ENCODE measurements at regions of chr16 and their contacts with region 1.

Region 1: DNA sequence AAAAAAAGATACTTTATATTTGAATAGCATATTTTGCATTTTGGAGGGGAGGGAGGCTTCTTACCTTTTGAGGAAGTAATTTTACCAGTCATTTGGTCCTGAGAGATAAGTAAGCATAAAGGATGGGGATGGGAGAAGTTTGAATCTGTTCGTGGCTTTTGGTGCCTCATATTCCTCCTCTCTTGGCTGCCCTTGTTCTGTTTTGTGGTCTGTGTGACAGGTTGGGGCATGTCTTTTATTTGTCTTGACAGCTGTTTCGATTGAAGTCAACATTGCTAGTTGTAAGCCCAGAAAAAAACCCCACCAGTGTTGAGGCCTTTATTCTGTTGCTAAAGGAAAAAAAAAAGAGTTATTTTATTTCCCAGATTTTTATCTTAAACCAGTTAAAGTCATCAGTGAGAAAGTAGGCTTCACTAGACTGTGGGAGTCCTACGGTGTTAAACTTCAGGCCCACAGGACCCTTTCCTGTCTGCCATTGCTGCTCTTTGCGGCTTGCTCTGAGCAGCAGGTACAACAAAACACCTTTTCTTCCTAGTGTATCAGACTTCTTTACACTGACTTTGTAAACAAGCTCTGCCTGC is 11.4 kb downstream of the SLC7A6 start:
- DNase-seq: peak in 9 of 10 donors; percentile 28 to 83 (median 66)
- ATAC-seq: peak; percentile 78 to 82
- H3K4me3 Mint-ChIP-seq: peak overlapping the region; percentile 49 to 93 (median 82)
- H3K27ac Mint-ChIP-seq: peak overlapping the region; percentile 89 to 100 (median 98)
- H3K4me1 Mint-ChIP-seq: peaks cover 31 to 76% (median 69%) of the 10 kb centered on the region in 4 donors
- H3K27me3 Mint-ChIP-seq: peaks cover 0 to 1% (median 0%) of the 10 kb centered on the region in 5 donors

Region 2: DNA sequence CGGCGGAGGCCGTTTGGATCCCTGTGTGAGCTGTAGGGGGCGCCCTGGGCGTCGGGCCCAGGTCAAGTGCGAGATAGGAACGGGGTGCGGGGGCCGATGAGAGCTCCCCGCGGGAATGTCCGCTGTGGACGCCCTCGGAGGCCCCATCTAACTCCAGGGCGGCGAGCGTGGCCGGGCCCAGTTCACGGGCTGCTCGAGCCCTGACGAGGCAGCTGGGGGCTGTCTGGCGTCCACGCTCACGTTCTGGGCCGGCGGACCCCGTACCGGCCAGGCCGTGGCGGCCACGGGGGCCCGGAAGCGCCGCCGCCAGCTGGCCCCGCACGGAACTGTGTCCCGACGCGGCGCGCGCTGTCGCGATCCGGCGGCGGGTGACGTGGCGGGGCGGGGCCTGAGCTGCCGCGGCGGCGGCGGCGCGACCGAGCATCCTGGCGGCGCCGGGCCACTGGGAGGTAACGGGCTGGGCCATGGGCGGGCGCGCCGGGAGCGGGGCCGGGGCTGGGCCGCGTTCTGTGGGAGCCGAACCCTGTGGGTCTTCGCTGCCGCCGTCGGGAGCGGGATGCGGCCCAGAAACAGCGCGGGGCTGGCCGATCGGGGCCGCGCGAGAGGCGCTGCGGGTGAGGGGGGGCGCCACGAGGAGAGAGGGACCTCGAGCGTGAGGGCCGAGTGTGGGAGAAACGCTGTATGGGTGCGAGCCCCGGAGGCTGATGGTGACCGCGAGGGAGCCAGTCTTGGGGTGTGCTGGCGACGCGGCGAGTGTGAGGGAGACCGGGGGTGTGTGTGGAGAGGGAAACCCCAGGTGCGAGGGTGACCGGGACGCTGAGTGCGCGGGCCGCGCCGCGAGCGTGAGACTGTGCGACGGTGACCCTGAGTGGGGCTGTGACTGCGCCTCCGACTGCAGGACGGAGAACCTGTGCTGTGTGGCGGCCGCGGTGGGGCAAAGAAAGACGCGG is 11.3 kb before region 1 on chr16 and contains the start of gene SLC7A6:
- POLR2A ChIA-PET with region 1: interaction called, 1,294 read pairs
- DNase-seq: peak; percentile 69 to 85 (median 82)
- ATAC-seq: peak; percentile 61 to 75
- H3K4me3 Mint-ChIP-seq: peak within 1 kb of the TSS; percentile 93 to 98 (median 96)
- H3K27ac Mint-ChIP-seq: peak within 1 kb of the TSS; percentile 89 to 99 (median 98)
- H3K4me1 Mint-ChIP-seq: peaks cover 35 to 62% (median 57%) of the 10 kb centered on the region in 4 donors
- H3K27me3 Mint-ChIP-seq: no peaks in the 10 kb centered on the region
- polyA plus RNA-seq, gene SLC7A6: 14.3 to 20.2 (median 19.2) TPM

Region 3: GRCh38 chr16:68644715-68645493 is 369.2 kb after region 1 on chr16 and contains the start of gene CDH3:
- POLR2A ChIA-PET with region 1: no interaction called
- DNase-seq: peak in 8 of 10 donors; percentile 4 to 32 (median 22)
- ATAC-seq: peak; percentile 71 to 74
- H3K4me3 Mint-ChIP-seq: peak within 1 kb of the TSS; percentile 48 to 76 (median 70)
- H3K27ac Mint-ChIP-seq: no peak within 1 kb of the TSS
- H3K4me1 Mint-ChIP-seq: peaks cover 2 to 25% (median 15%) of the 10 kb centered on the region in 4 donors
- H3K27me3 Mint-ChIP-seq: peaks cover 26 to 80% (median 51%) of the 10 kb centered on the region in 5 donors
- polyA plus RNA-seq, gene CDH3: not detected

Measured in naive thymus-derived CD8-positive, alpha-beta T cell (primary cell).